ENCODE measurements at regions of chr11 and their contacts with region 1.

Region 1: DNA sequence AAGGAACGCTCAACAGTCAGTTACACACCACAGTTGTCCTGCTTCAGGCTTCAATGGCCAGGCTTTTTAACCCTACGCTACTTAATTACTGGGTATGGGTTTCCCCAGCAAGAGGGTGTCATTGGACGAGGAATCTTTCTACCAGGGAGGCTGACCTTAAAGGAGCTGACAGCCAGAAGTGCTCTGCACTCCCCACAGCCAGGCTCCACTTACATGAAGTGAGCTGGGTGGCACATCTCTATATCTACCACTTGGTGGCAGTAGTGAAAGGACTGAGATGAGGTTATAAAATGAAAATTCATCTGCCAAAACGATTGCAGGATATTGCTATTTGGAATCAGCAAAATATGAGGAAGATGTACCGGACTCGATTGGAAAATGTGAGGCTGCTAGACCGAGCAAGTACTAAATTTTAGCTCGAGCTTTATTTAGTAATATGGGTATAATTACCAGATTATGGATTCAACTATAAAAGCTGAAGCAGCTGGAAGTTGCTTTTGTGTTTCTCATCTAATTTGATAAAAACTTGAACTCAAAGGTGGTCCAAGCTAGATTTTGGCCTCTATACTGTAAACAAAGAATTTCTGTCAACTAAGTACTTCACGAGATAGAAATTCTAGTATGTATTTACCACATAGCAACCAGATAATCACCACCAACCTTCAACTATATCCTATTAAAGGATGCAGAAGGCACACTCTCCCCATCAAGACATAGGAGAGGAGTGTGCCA is 53.9 kb upstream of the CEP126 start:
- DNase-seq: peak in 1 of 2 experiments; percentile 29
- H3K4me3 ChIP-seq: no peak overlapping the region
- H3K27ac ChIP-seq: no peak overlapping the region
- H3K4me1 ChIP-seq: no peaks in the 10 kb centered on the region
- H3K27me3 ChIP-seq: no peaks in the 10 kb centered on the region
- CTCF ChIP-seq: peak; percentile 46 to 74 (median 69)
- EP300 ChIP-seq: no peak
- POLR2A ChIP-seq: no peak
- RAD21 ChIP-seq: peak; percentile 61 to 68

Region 2: GRCh38 chr11:101436511-101437142 is 424.2 kb before region 1 on chr11:
- CTCF ChIA-PET with region 1: interaction called, 46 read pairs
- POLR2A ChIA-PET with region 1: no interaction called
- DNase-seq: peak in 1 of 2 experiments; percentile 74
- H3K4me3 ChIP-seq: no peak overlapping the region
- H3K27ac ChIP-seq: no peak overlapping the region
- H3K4me1 ChIP-seq: no peaks in the 10 kb centered on the region
- H3K27me3 ChIP-seq: no peaks in the 10 kb centered on the region
- CTCF ChIP-seq: peak; percentile 8 to 84 (median 75)
- EP300 ChIP-seq: no peak
- POLR2A ChIP-seq: no peak
- RAD21 ChIP-seq: peak; percentile 86 to 92

Region 3: DNA sequence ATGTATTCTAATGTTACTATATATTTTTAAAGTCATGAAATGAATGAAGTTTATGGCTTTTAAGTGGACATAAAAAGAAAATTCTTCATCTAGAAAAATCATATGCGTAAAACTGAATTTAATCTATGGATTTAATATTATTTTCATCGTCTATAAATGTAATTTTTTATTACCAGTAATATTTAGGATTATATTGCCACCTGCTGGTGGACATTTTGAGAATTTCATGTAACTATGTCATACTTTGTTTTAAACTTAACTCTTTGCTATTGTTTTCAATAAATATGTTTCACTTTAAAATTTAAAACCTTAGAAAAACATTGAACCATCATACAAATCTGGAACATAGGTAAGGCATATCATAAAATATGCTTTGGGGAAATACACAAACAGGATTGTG is 12.6 kb before region 1 on chr11:
- CTCF ChIA-PET with region 1: interaction called, 22 read pairs
- POLR2A ChIA-PET with region 1: interaction called, 3 read pairs
- DNase-seq: no peak
- H3K4me3 ChIP-seq: no peak overlapping the region
- H3K27ac ChIP-seq: no peak overlapping the region
- H3K4me1 ChIP-seq: no peaks in the 10 kb centered on the region
- H3K27me3 ChIP-seq: no peaks in the 10 kb centered on the region
- CTCF ChIP-seq: no peak
- EP300 ChIP-seq: no peak
- POLR2A ChIP-seq: no peak
- RAD21 ChIP-seq: peak in 1 of 2 experiments; percentile 30; a peak in 3 of 4 replicates

Region 4: DNA sequence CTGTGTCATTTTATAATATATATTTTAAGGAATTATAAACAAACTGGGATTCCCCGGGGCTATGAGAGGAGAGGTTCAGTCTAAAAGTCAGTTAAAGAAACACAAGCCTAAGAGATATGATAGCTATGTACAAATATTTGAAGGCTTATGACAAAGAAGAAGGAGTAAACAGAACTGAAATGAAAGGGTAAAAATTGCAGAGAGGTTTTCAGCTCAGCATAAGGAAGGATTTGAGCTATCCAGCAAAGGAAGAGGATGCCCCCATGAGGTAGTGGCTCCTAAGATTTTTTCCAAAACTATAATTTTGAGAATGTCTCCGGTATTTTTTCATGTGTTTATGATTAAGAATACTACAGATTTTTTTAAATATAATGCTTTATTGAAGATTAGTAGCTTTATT is 113.4 kb after region 1 on chr11:
- CTCF ChIA-PET with region 1: interaction called, 21 read pairs
- POLR2A ChIA-PET with region 1: no interaction called
- DNase-seq: no peak
- H3K4me3 ChIP-seq: no peak overlapping the region
- H3K27ac ChIP-seq: no peak overlapping the region
- H3K4me1 ChIP-seq: no peaks in the 10 kb centered on the region
- H3K27me3 ChIP-seq: peaks cover 0 to 1% (median 0%) of the 10 kb centered on the region in 4 experiments; a peak in 1 of 7 replicates
- CTCF ChIP-seq: no peak; a peak in 1 of 4 replicates
- EP300 ChIP-seq: no peak
- POLR2A ChIP-seq: no peak
- RAD21 ChIP-seq: peak; percentile 18 to 22; a peak in 2 of 4 replicates

Region 5: GRCh38 chr11:102007567-102008437 is 146.9 kb after region 1 on chr11:
- CTCF ChIA-PET with region 1: interaction called, 134 read pairs
- POLR2A ChIA-PET with region 1: no interaction called
- DNase-seq: no peak
- H3K4me3 ChIP-seq: no peak overlapping the region
- H3K27ac ChIP-seq: no peak overlapping the region
- H3K4me1 ChIP-seq: peaks cover 0 to 3% (median 0%) of the 10 kb centered on the region in 4 experiments; a peak in 1 of 7 replicates
- H3K27me3 ChIP-seq: no peaks in the 10 kb centered on the region
- CTCF ChIP-seq: peak in 2 of 3 experiments; percentile 23 to 29; a peak in 2 of 4 replicates
- EP300 ChIP-seq: no peak
- POLR2A ChIP-seq: no peak
- RAD21 ChIP-seq: peak in 1 of 2 experiments; percentile 56

Measured in H1 (cell line).